ENCODE measurements at regions of chr3 and their contacts with region 1.

Region 1: GRCh38 chr3:57100046-57100695 is 39.7 kb downstream of the SPATA12 start:
- DNase-seq: peak in 1 of 2 experiments; percentile 85
- H3K4me3 ChIP-seq: no peak overlapping the region
- H3K27ac ChIP-seq: no peak overlapping the region
- H3K4me1 ChIP-seq: no peaks in the 10 kb centered on the region
- H3K27me3 ChIP-seq: no peaks in the 10 kb centered on the region
- CTCF ChIP-seq: peak; percentile 26 to 90 (median 76)
- EP300 ChIP-seq: no peak
- POLR2A ChIP-seq: no peak
- RAD21 ChIP-seq: peak; percentile 96

Region 2: DNA sequence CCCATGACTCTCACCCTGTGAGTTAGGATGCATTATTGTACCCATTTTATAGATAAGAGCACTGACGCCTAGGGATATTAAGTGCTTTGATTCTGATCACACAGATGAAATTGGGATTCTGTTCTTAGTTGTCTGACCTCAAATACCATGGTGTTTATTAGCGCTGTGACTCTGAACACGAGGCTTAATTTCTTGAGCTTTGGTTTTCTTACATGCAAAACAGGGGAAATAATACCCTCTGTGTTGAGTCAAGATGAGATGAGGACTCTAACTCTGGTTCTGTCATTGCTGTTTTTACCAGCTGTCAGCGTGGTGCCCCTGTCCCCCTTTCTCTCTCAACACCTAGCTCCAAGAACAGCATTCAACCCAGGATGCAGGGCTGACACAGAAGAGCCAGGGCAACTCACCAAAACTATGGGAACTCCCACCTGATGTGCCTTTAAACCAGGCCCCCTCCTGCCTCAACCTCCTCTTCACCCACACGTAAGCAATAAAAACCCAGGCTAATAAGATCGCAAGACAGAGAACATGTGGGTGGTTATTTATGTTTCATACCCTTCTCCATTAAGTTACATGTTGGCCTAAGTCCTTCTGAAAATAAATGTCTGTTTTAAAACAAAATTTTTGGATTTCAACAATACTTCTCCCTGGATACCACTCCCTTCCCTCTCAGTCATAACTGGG is 139.8 kb before region 1 on chr3:
- CTCF ChIA-PET with region 1: no interaction called
- POLR2A ChIA-PET with region 1: no interaction called
- DNase-seq: no peak
- H3K4me3 ChIP-seq: no peak overlapping the region
- H3K27ac ChIP-seq: no peak overlapping the region
- H3K4me1 ChIP-seq: no peaks in the 10 kb centered on the region
- H3K27me3 ChIP-seq: no peaks in the 10 kb centered on the region
- CTCF ChIP-seq: no peak
- EP300 ChIP-seq: no peak
- POLR2A ChIP-seq: no peak
- RAD21 ChIP-seq: no peak

Region 3: DNA sequence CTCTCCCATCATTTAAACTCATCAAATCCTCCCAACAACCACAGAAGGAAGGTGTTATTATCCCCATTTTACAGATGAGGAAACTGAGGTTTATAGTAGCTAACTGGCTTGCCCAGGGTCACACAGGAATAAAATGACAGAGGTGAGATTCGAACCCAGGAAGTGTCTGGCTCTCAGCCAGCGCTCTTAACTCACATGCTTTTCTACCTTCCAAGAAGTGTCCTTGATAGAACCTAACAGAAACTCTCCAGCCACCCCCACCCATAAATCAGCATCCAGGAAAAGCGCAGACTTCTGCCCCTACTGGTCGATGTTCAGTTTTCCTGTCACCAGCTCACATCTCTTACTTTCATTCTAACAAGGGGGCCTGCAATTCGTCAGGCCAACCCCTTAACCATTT is 12.0 kb after region 1 on chr3:
- CTCF ChIA-PET with region 1: interaction called, 44 read pairs
- POLR2A ChIA-PET with region 1: interaction called, 7 read pairs
- DNase-seq: no peak
- H3K4me3 ChIP-seq: no peak overlapping the region
- H3K27ac ChIP-seq: no peak overlapping the region
- H3K4me1 ChIP-seq: peaks cover 0 to 12% (median 8%) of the 10 kb centered on the region in 4 experiments; a peak in 4 of 7 replicates
- H3K27me3 ChIP-seq: no peaks in the 10 kb centered on the region
- CTCF ChIP-seq: peak; percentile 30 to 53 (median 34); a peak in 3 of 4 replicates
- EP300 ChIP-seq: no peak
- POLR2A ChIP-seq: no peak
- RAD21 ChIP-seq: peak in 1 of 2 experiments; percentile 34; a peak in 1 of 4 replicates

Region 4: DNA sequence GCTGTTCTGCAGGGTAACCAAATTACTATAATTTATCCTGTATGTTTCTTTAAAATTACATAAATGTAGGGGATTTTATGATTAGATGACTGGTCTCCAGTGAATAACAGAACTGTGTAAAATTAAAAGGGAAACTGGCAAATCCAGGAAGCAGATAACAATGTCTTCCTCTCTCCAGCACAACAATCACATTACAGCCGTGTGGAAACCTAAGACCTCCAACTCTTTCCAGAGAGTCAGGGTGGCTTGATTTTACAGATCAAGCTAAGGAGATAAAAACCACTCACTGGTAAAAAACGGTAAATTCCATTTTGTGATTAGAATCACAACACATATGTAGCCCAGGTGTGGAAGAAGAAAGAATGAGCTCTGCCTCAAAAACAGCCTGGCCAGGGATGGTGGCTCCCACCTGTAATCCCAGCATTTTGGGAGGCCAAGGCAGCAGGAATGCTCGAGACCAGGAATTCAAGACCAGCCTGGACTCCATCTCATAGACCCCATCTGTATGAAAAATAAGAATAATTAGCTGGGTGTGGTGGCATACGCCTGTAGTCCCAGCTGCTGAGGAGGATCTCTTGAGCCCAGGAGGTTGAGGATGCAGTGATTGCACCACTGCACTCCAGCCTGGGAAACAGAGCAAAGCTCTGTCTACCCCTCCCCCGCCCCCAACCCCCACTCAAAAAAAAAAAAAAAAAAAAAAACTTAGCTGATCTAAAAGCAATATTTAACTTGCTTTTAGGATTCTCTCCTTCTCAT is 36.0 kb after region 1 on chr3:
- CTCF ChIA-PET with region 1: interaction called, 11 read pairs
- POLR2A ChIA-PET with region 1: interaction called, 3 read pairs
- DNase-seq: no peak
- H3K4me3 ChIP-seq: no peak overlapping the region
- H3K27ac ChIP-seq: no peak overlapping the region
- H3K4me1 ChIP-seq: peaks cover 9 to 19% (median 17%) of the 10 kb centered on the region in 4 experiments
- H3K27me3 ChIP-seq: no peaks in the 10 kb centered on the region
- CTCF ChIP-seq: no peak
- EP300 ChIP-seq: no peak
- POLR2A ChIP-seq: no peak
- RAD21 ChIP-seq: no peak

Region 5: GRCh38 chr3:57164657-57165573 is 64.7 kb after region 1 on chr3 and contains the start of gene IL17RD:
- CTCF ChIA-PET with region 1: interaction called, 64 read pairs
- POLR2A ChIA-PET with region 1: no interaction called
- DNase-seq: peak; percentile 65 to 92
- H3K4me3 ChIP-seq: peak within 1 kb of the TSS; percentile 67 to 83 (median 72)
- H3K27ac ChIP-seq: 0 out of 2 replicates have a peak within 1 kb of the TSS, but pooled peaks have one; percentile 24
- H3K4me1 ChIP-seq: peaks cover 10 to 42% (median 25%) of the 10 kb centered on the region in 4 experiments
- H3K27me3 ChIP-seq: peaks cover 6 to 28% (median 23%) of the 10 kb centered on the region in 4 experiments
- CTCF ChIP-seq: no peak
- EP300 ChIP-seq: 0 out of 3 replicates have a peak, but pooled peaks of 1 of the 2 experiments have one; percentile 22
- POLR2A ChIP-seq: no peak
- RAD21 ChIP-seq: no peak
- total RNA-seq, gene IL17RD: 41.3 and 48.9 TPM in 2 replicates

Region 6: GRCh38 chr3:57179580-57180410 is 79.6 kb after region 1 on chr3:
- CTCF ChIA-PET with region 1: interaction called, 10 read pairs
- POLR2A ChIA-PET with region 1: no interaction called
- DNase-seq: no peak
- H3K4me3 ChIP-seq: no peak overlapping the region
- H3K27ac ChIP-seq: no peak overlapping the region
- H3K4me1 ChIP-seq: no peaks in the 10 kb centered on the region
- H3K27me3 ChIP-seq: no peaks in the 10 kb centered on the region
- CTCF ChIP-seq: peak in 2 of 3 experiments; percentile 61 to 70; a peak in 3 of 4 replicates
- EP300 ChIP-seq: no peak
- POLR2A ChIP-seq: no peak
- RAD21 ChIP-seq: peak; percentile 82 to 86